Activated CD4-positive, alpha-beta T cell treated with anti-CD3 and anti-CD28 coated beads for 36 hours (primary cell): ENCODE measurements at regions of chr1 and their contacts with region 1.

Region 1: DNA sequence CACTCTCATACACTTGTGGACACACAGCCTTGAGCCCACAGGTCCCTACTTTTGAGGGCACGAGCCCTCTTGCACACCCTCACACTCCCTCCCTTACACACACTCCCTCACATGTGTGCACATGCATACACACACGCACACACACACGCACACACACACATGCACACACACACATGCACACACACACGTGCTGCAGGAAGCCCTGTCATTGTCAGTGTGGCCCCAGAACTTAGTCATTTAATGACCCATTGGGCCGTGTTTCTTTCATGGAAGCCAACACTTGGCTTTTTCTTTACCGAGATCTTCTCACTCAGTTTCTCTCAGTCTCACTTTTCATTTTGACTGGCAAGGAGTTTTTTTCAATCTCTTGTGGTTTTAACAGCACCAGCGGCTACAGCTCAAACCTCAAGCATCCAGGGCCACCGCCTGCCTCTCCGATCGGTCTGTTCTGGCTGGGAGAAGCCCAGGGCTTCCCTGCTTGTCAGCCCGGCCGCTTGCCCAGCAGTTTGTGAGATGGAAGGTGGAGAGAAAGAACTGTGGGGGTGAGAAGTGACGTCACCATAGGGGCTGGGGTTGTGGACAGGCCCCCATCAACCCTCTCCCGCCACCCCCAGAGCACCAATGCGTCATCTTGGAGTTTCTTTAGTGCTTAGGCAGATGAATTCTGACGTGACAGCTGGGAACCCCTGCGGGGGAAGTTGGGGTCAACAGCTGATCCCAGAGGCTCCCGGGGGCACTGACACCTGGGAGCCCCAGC is 15.8 kb upstream of the TNFRSF8 start:
- DNase-seq: peak; percentile 86
- ATAC-seq: peak; percentile 79
- H3K4me3 Mint-ChIP-seq: no peak overlapping the region
- H3K27ac Mint-ChIP-seq: no peak overlapping the region
- H3K4me1 Mint-ChIP-seq: peaks cover 22% of the 10 kb centered on the region
- H3K27me3 Mint-ChIP-seq: peaks cover 6% of the 10 kb centered on the region

Region 2: GRCh38 chr1:11671544-11672286 is 375.6 kb before region 1 on chr1:
- CTCF ChIA-PET with region 1: no interaction called
- POLR2A ChIA-PET with region 1: no interaction called
- intact Hi-C with region 1: no loop called
- DNase-seq: no peak
- ATAC-seq: no peak
- H3K4me3 Mint-ChIP-seq: no peak overlapping the region
- H3K27ac Mint-ChIP-seq: no peak overlapping the region
- H3K4me1 Mint-ChIP-seq: no peaks in the 10 kb centered on the region
- H3K27me3 Mint-ChIP-seq: no peaks in the 10 kb centered on the region

Region 3: DNA sequence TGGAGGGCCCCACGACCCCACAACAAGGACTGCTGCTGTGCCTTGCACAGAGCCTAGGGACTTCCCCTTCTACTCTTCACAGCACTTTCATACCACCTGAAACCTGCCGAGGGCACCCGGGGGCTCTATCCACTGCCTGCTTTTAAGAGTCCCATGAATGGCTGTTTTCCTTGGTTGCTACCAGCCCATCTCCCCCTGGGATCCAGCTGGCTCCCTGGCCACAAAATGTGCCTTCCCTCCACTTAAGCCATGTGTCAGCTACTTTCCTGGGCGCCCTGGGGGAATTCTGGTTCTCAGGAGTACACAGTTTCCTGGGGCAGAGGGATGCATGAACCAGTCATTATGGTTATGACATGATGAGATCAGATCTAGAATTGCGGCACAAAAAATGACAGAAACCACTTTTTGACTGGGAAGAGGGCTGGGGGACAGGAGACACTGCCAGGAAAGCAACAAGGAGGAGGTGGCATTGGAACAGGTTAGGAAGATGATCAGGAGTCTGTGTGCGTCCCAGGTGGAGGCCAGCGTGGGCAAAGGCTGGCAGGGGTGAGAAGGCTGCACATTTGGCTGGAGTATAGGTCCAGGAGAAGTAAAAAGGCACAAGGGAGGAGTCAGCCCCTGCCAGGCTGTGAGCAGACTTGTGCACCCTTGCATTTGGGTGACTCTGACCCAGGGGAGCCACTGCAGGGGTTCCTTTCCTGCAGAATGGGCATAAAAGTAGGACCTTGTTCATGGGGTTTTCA is 12.6 kb after region 1 on chr1:
- CTCF ChIA-PET with region 1: interaction called, 12 read pairs
- POLR2A ChIA-PET with region 1: interaction called, 18 read pairs
- intact Hi-C with region 1: loop called (anchors 1 kb)
- DNase-seq: peak; percentile 67
- ATAC-seq: peak; percentile 56
- H3K4me3 Mint-ChIP-seq: peak overlapping the region; percentile 3
- H3K27ac Mint-ChIP-seq: peak overlapping the region; percentile 56
- H3K4me1 Mint-ChIP-seq: peaks cover 71% of the 10 kb centered on the region
- H3K27me3 Mint-ChIP-seq: peaks cover 29% of the 10 kb centered on the region

Region 4: GRCh38 chr1:12078938-12079861 is 31.9 kb after region 1 on chr1:
- CTCF ChIA-PET with region 1: interaction called, 15 read pairs
- POLR2A ChIA-PET with region 1: no interaction called
- intact Hi-C with region 1: loop called in 1 of 2 experiments (anchors 5 kb)
- DNase-seq: peak; percentile 77
- ATAC-seq: peak; percentile 79
- H3K4me3 Mint-ChIP-seq: no peak overlapping the region
- H3K27ac Mint-ChIP-seq: peak overlapping the region; percentile 67
- H3K4me1 Mint-ChIP-seq: peaks cover 24% of the 10 kb centered on the region
- H3K27me3 Mint-ChIP-seq: peaks cover 5% of the 10 kb centered on the region

Region 5: DNA sequence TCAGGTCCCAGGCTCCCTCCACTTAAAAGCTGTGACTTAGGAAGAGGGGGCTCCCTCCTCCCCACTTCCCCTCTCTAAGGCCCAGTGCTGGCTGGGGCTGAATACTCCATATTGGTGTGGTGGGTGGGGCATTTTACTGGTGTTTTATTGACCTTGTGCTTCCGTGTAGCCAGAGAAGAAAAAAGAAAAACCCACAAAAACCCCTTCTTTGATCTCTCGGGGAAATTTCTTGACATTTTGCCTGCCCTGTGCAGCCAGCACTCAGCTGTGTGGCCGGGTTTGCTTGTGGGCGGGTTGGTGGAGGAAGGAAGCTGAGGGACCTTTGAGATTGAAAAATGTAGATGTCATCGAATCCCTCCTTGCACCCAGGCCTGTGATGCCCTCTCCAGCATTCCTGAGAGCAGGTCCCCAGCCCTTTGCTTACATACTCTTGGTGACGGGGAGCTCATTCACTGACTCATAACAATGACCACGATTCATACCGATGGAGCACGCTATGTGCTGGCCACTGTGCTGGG is 40.6 kb after region 1 on chr1:
- CTCF ChIA-PET with region 1: interaction called, 3 read pairs
- POLR2A ChIA-PET with region 1: no interaction called
- intact Hi-C with region 1: loop called in 1 of 2 experiments (anchors 5 kb)
- DNase-seq: peak; percentile 72
- ATAC-seq: peak; percentile 62
- H3K4me3 Mint-ChIP-seq: peak overlapping the region; percentile 9
- H3K27ac Mint-ChIP-seq: peak overlapping the region; percentile 72
- H3K4me1 Mint-ChIP-seq: peaks cover 41% of the 10 kb centered on the region
- H3K27me3 Mint-ChIP-seq: no peaks in the 10 kb centered on the region

Region 6: DNA sequence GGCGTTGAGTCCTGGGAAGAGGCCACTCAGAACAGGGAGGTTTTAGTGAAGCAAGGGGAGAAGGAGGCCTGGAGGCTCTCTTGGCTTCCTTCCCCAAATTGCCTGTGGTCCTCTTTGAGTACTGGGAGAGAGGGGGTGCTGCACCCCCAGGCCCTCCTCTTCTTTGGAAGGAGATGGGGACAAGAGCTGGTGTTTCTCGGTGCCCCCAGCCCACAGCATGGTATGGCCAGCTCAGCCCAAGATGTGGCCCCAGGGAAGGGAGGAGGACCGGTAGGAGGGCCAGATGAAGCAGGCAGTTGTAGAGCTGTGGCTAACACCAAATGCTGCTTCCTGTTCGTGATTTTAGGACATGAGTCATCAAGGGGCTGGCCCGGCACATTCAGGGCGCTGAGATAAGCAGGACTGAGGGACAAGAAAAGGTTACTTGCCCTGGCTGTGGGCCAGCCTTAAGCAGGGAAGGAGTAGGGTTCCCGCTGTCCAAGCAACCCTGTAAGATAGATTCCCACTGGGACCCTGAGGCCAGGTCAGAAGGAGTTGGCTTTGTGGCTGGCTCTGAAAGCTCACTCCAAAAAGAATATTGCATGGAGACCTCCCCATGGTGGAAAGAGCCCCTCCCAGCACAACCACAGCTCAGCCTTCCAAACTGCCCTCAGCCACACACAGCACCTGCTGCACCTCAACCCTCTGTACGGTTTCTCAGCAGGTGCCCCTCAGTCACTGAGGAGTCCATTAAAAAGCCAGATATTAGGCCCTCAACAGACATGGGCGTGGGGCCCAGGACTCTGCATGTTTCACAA is 114.6 kb after region 1 on chr1:
- CTCF ChIA-PET with region 1: no interaction called
- POLR2A ChIA-PET with region 1: interaction called, 3 read pairs
- intact Hi-C with region 1: loop called in 1 of 2 experiments (anchors 5 kb)
- DNase-seq: peak; percentile 89
- ATAC-seq: peak; percentile 84
- H3K4me3 Mint-ChIP-seq: peak overlapping the region; percentile 15
- H3K27ac Mint-ChIP-seq: peak overlapping the region; percentile 91
- H3K4me1 Mint-ChIP-seq: peaks cover 73% of the 10 kb centered on the region
- H3K27me3 Mint-ChIP-seq: no peaks in the 10 kb centered on the region

Region 7: GRCh38 chr1:12296623-12297022 is 249.3 kb after region 1 on chr1:
- CTCF ChIA-PET with region 1: no interaction called
- POLR2A ChIA-PET with region 1: no interaction called
- intact Hi-C with region 1: loop called in 1 of 2 experiments (anchors 5 kb)
- DNase-seq: no peak
- ATAC-seq: peak; percentile 90
- H3K4me3 Mint-ChIP-seq: no peak overlapping the region
- H3K27ac Mint-ChIP-seq: no peak overlapping the region
- H3K4me1 Mint-ChIP-seq: peaks cover 22% of the 10 kb centered on the region
- H3K27me3 Mint-ChIP-seq: no peaks in the 10 kb centered on the region